H1 (cell line): ENCODE measurements at regions of chr22 and their contacts with region 1.

Region 1: DNA sequence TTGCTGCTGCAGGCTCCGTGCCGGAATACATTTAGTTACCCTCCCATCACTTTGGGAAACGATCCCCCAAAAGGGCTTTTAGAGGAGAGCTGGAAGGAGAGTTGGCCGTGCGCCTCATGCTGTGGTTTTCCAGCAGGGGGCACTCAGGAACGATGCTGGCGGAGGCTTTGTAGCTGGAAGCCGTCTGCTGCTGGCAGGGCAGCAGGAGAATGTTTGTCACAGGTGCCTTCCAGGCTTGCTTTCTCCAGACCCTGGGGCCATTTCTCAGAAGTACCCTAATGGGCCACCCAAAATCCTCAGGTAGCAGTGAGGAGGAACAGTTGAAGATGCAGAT is 30.0 kb upstream of the CABP7 start:
- DNase-seq: peak; percentile 41 to 86
- H3K4me3 ChIP-seq: no peak overlapping the region
- H3K27ac ChIP-seq: no peak overlapping the region
- H3K4me1 ChIP-seq: peaks cover 12 to 41% (median 28%) of the 10 kb centered on the region in 4 experiments
- H3K27me3 ChIP-seq: no peaks in the 10 kb centered on the region
- CTCF ChIP-seq: peak; percentile 78 to 89 (median 89)
- EP300 ChIP-seq: no peak
- POLR2A ChIP-seq: no peak
- RAD21 ChIP-seq: peak; percentile 73 to 81

Region 2: DNA sequence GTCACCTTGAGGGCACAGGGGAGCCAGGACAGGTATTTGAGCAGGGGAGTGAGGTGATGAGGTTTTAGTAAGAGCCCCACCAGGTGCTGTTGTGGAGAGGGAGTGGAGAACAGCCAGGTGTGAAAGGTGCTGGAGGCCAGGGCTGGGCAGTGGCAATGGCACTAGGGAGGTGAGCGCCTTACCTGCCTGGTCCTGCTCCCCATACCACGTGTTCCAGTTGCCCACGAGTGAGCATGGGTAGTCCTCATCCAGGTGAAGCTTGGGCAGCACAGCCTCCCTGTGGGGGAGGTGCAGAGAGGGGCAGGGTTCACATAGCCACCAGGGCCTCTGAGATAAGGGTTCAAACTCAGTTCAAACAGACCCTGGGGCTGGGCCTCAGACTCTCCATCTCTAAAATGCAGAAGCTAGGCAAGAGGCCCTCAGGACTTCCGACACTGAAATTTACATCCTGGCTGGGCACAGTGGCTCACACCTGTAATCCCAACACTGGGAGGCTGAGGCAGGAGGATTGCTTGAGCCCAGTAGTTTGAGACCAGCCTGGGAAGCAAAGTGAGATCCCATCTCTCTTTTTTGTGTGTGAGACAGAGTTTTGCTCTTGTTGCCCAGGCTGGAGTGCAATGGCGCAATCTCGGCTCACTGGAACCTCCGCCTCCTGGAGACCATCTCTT is 120.7 kb before region 1 on chr22:
- CTCF ChIA-PET with region 1: no interaction called
- POLR2A ChIA-PET with region 1: no interaction called
- DNase-seq: no peak
- H3K4me3 ChIP-seq: no peak overlapping the region
- H3K27ac ChIP-seq: no peak overlapping the region
- H3K4me1 ChIP-seq: no peaks in the 10 kb centered on the region
- H3K27me3 ChIP-seq: no peaks in the 10 kb centered on the region
- CTCF ChIP-seq: no peak
- EP300 ChIP-seq: no peak
- POLR2A ChIP-seq: no peak
- RAD21 ChIP-seq: no peak

Region 3: GRCh38 chr22:29670626-29671025 is 19.2 kb before region 1 on chr22:
- CTCF ChIA-PET with region 1: interaction called, 10 read pairs
- POLR2A ChIA-PET with region 1: no interaction called
- DNase-seq: no peak
- H3K4me3 ChIP-seq: no peak overlapping the region
- H3K27ac ChIP-seq: no peak overlapping the region
- H3K4me1 ChIP-seq: peaks cover 0 to 2% (median 0%) of the 10 kb centered on the region in 4 experiments; a peak in 1 of 7 replicates
- H3K27me3 ChIP-seq: no peaks in the 10 kb centered on the region
- CTCF ChIP-seq: no peak
- EP300 ChIP-seq: no peak
- POLR2A ChIP-seq: no peak
- RAD21 ChIP-seq: no peak

Region 4: DNA sequence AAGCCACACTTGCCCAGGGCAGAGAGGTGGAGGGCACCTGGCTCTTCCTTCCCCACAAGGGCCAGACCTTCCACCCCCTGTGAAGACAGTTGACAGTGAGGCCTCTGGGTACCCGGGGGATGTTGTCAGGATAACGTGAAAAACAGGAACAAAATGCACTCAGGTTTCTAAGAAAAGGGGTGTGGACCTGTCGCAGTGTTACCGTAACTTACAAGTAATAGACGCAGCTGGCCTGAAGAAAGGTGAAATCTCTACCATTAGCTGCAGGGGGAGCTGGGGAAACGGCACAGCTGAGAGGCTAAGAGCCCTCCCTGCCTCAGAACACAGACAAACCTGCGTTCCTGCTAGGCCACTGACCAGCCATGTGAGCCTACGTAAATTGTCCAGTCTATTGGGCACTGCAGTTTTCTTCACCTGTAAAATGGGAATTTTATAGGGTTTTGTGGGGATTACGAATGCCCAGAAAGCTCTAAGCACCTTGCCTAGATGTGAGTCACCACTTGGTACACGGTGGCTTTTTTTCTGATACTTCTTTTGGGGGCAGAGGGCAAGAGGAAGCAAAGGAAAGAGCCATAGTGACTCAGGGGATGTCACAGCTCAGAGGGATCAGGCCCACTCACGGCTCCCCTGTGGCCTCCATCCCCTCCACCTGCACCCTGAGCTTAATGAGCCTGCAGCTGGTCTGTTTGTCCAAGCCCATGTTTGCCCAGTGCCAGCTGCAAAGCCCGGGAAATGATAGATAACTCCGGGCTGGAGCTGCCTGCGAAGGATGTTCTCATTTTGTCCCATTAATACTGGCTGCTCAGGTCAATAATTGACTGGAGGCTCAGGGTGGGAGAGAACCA is 11.5 kb after region 1 on chr22:
- CTCF ChIA-PET with region 1: interaction called, 60 read pairs
- POLR2A ChIA-PET with region 1: interaction called, 13 read pairs
- DNase-seq: no peak
- H3K4me3 ChIP-seq: no peak overlapping the region
- H3K27ac ChIP-seq: no peak overlapping the region
- H3K4me1 ChIP-seq: peaks cover 9 to 53% (median 45%) of the 10 kb centered on the region in 4 experiments
- H3K27me3 ChIP-seq: peaks cover 0 to 30% (median 12%) of the 10 kb centered on the region in 4 experiments; a peak in 3 of 7 replicates
- CTCF ChIP-seq: peak; percentile 43 to 68 (median 54)
- EP300 ChIP-seq: no peak
- POLR2A ChIP-seq: no peak
- RAD21 ChIP-seq: peak; percentile 59 to 68

Region 5: GRCh38 chr22:29710922-29711593 is 21.2 kb after region 1 on chr22:
- CTCF ChIA-PET with region 1: interaction called, 12 read pairs
- POLR2A ChIA-PET with region 1: no interaction called
- DNase-seq: no peak
- H3K4me3 ChIP-seq: no peak overlapping the region
- H3K27ac ChIP-seq: no peak overlapping the region
- H3K4me1 ChIP-seq: peaks cover 0 to 6% (median 2%) of the 10 kb centered on the region in 4 experiments; a peak in 5 of 7 replicates
- H3K27me3 ChIP-seq: no peaks in the 10 kb centered on the region; a peak in 1 of 7 replicates
- CTCF ChIP-seq: no peak
- EP300 ChIP-seq: no peak
- POLR2A ChIP-seq: no peak
- RAD21 ChIP-seq: no peak

Region 6: GRCh38 chr22:29727131-29727523 is 37.3 kb after region 1 on chr22:
- CTCF ChIA-PET with region 1: interaction called, 10 read pairs
- POLR2A ChIA-PET with region 1: no interaction called
- DNase-seq: peak in 1 of 2 experiments; percentile 79
- H3K4me3 ChIP-seq: no peak overlapping the region
- H3K27ac ChIP-seq: no peak overlapping the region
- H3K4me1 ChIP-seq: peaks cover 0 to 6% (median 4%) of the 10 kb centered on the region in 4 experiments; a peak in 6 of 7 replicates
- H3K27me3 ChIP-seq: peaks cover 0 to 9% (median 3%) of the 10 kb centered on the region in 4 experiments; a peak in 4 of 7 replicates
- CTCF ChIP-seq: peak; percentile 42 to 62 (median 45)
- EP300 ChIP-seq: no peak
- POLR2A ChIP-seq: no peak
- RAD21 ChIP-seq: peak; percentile 55 to 63